Caco-2 (cell line): ENCODE measurements at regions of chr7 and their contacts with region 1.

Region 1: DNA sequence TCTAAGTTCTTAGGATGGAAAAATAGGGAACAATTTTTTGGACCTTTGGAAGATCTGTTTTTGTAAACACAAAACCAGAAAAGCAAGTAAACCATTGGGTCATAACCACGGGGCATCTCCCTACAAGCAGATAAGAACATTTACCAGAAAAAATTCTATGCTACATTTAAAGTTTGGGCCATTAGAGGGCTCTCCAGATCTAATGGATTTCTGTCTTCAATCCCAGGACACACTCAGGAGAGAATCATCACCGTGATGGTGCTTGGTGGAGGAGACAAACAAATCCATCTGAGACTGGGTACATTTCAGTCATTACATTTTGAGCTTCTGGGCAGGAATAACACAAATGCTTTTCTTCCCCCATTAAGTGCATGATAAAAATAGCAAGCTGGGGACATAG is 178.4 kb upstream of the TARP start:
- DNase-seq: peak in 1 of 2 experiments; percentile 14
- H3K4me3 ChIP-seq: no peak overlapping the region
- H3K4me3 Mint-ChIP-seq: no peak overlapping the region
- H3K27ac Mint-ChIP-seq: no peak overlapping the region
- H3K4me1 ChIP-seq: no peaks in the 10 kb centered on the region
- H3K4me1 Mint-ChIP-seq: no peaks in the 10 kb centered on the region
- H3K27me3 ChIP-seq: no peaks in the 10 kb centered on the region; the same call in 1 of the 2 replicates
- H3K27me3 Mint-ChIP-seq: peaks cover 7% of the 10 kb centered on the region
- CTCF ChIP-seq: peak in 1 of 2 experiments; percentile 11

Region 2: DNA sequence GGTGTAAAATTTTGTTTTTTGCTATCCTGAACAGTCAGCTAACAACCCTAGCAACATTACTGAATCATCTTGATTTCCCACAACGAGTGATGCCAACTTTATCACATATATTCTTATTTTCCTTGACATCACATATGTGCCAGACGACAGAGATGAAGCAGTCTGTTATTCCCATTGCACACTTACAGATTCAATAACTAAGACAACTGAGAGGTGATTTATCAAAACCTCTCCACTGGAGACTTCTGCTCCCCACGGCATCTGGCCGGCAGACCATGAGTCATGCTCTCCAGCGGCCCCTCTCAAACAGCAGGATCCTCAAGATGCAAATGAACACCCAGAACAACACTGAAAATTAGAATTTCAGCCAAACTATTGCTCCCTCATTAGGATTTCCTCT is 122.2 kb after region 1 on chr7:
- CTCF ChIA-PET with region 1: no interaction called
- POLR2A ChIA-PET with region 1: no interaction called
- intact Hi-C with region 1: no loop called
- DNase-seq: no peak
- H3K4me3 ChIP-seq: no peak overlapping the region
- H3K4me3 Mint-ChIP-seq: no peak overlapping the region
- H3K27ac Mint-ChIP-seq: no peak overlapping the region
- H3K4me1 ChIP-seq: no peaks in the 10 kb centered on the region
- H3K4me1 Mint-ChIP-seq: no peaks in the 10 kb centered on the region
- H3K27me3 ChIP-seq: no peaks in the 10 kb centered on the region; the same call in 1 of the 2 replicates
- H3K27me3 Mint-ChIP-seq: peaks cover 11% of the 10 kb centered on the region
- CTCF ChIP-seq: no peak

Region 3: GRCh38 chr7:38660427-38661099 is 208.7 kb after region 1 on chr7:
- CTCF ChIA-PET with region 1: no interaction called
- POLR2A ChIA-PET with region 1: no interaction called
- intact Hi-C with region 1: loop called (anchors 1 kb)
- DNase-seq: peak in 1 of 2 experiments; percentile 29
- H3K4me3 ChIP-seq: no peak overlapping the region
- H3K4me3 Mint-ChIP-seq: no peak overlapping the region
- H3K27ac Mint-ChIP-seq: no peak overlapping the region
- H3K4me1 ChIP-seq: no peaks in the 10 kb centered on the region
- H3K4me1 Mint-ChIP-seq: no peaks in the 10 kb centered on the region
- H3K27me3 ChIP-seq: no peaks in the 10 kb centered on the region
- H3K27me3 Mint-ChIP-seq: peaks cover 15% of the 10 kb centered on the region
- CTCF ChIP-seq: peak; percentile 45 to 54

Region 4: DNA sequence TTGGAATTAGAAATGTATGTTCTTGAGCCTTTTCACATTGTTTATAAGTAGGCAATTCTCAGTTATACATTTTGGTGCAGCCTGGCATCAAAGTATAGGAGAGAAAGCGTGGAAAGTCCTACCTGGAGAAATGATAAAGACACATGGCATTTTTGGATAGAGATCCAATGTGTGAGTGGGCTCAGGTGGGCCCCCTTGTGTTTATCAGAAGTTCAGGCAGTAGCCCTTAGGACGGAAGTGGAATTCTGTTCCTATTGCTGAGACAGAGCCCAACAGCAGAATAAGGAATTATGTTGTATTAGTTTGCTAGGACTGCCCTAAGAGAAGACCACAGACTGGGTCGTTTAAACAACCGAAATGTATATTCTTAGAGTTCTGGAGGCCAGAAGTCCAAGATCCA is 264.6 kb after region 1 on chr7:
- CTCF ChIA-PET with region 1: no interaction called
- POLR2A ChIA-PET with region 1: no interaction called
- intact Hi-C with region 1: loop called (anchors 5 kb)
- DNase-seq: peak in 1 of 2 experiments; percentile 5
- H3K4me3 ChIP-seq: no peak overlapping the region
- H3K4me3 Mint-ChIP-seq: no peak overlapping the region
- H3K27ac Mint-ChIP-seq: no peak overlapping the region
- H3K4me1 ChIP-seq: no peaks in the 10 kb centered on the region
- H3K4me1 Mint-ChIP-seq: no peaks in the 10 kb centered on the region
- H3K27me3 ChIP-seq: no peaks in the 10 kb centered on the region
- H3K27me3 Mint-ChIP-seq: peaks cover 8% of the 10 kb centered on the region
- CTCF ChIP-seq: peak in 1 of 2 experiments; percentile 16